Motor neuron (in vitro differentiated cells): ENCODE measurements at regions of chr19 and their contacts with region 1.

Region 1: GRCh38 chr19:8240274-8241229 is 31.4 kb downstream of the CERS4 start:
- ATAC-seq: peak; percentile 90 to 94 (median 92)
- H3K4me3 ChIP-seq: peak overlapping the region in 2 of 5 donors; percentile 5 to 12
- H3K27ac ChIP-seq: peak overlapping the region; percentile 76 to 93
- H3K4me1 ChIP-seq: peaks cover 10 to 14% of the 10 kb centered on the region in 2 donors

Region 2: GRCh38 chr19:7943444-7944176 is 296.9 kb before region 1 on chr19 and contains the start of gene TIMM44:
- in situ Hi-C with region 1: loop called in 1 of 9 experiments (anchors 25 kb)
- ATAC-seq: peak; percentile 92 to 97 (median 94)
- H3K4me3 ChIP-seq: peak within 1 kb of the TSS; percentile 70 to 85 (median 73)
- H3K27ac ChIP-seq: peak within 1 kb of the TSS; percentile 97
- H3K4me1 ChIP-seq: peaks cover 7 to 9% of the 10 kb centered on the region in 2 donors
- total RNA-seq, gene TIMM44: 38.7 to 106 (median 65.1) TPM

Region 3: GRCh38 chr19:7970716-7971448 is 269.7 kb before region 1 on chr19:
- in situ Hi-C with region 1: loop called in 1 of 9 experiments (anchors 25 kb)
- ATAC-seq: peak in 7 of 8 experiments; percentile 9 to 80 (median 31)
- H3K4me3 ChIP-seq: no peak overlapping the region
- H3K27ac ChIP-seq: no peak overlapping the region
- H3K4me1 ChIP-seq: peaks cover 5% of the 10 kb centered on the region in 2 donors

Region 4: DNA sequence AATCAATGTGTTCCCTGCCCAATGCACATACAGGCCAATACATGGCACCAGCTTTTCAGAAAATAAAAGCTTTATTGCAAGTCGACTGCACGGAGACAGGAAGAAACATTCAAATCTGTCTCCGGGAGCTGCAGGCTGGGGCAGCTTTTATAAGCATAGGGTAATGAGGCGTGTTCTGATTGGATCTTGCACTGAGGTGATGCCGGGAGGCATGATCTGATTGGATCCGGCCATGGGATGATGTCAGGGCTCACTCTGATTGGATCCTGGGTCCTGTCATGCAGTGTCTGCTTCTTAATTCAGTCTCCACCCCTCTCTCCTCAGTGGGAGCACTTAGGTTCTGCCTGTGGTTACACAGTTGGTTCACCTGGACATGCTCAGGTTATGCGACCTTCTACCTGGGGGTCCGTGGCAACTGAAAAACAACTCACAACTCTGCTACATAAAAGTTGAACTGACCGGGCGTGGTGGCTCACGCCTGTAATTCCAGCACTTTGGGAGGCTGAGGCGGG is 79.4 kb before region 1 on chr19:
- in situ Hi-C with region 1: loop called in 1 of 9 experiments (anchors 10 kb)
- ATAC-seq: peak in 7 of 8 experiments; percentile 25 to 89 (median 80)
- H3K4me3 ChIP-seq: no peak overlapping the region
- H3K27ac ChIP-seq: peak overlapping the region; percentile 71 to 81
- H3K4me1 ChIP-seq: peaks cover 19 to 23% of the 10 kb centered on the region in 2 donors

Region 5: GRCh38 chr19:8438236-8438635 is 197.7 kb after region 1 on chr19:
- in situ Hi-C with region 1: no loop called
- ATAC-seq: no peak
- H3K4me3 ChIP-seq: no peak overlapping the region
- H3K27ac ChIP-seq: no peak overlapping the region
- H3K4me1 ChIP-seq: peaks cover 0 to 2% of the 10 kb centered on the region in 2 donors